ENCODE measurements at regions of chr3 and their contacts with region 1.

Region 1: DNA sequence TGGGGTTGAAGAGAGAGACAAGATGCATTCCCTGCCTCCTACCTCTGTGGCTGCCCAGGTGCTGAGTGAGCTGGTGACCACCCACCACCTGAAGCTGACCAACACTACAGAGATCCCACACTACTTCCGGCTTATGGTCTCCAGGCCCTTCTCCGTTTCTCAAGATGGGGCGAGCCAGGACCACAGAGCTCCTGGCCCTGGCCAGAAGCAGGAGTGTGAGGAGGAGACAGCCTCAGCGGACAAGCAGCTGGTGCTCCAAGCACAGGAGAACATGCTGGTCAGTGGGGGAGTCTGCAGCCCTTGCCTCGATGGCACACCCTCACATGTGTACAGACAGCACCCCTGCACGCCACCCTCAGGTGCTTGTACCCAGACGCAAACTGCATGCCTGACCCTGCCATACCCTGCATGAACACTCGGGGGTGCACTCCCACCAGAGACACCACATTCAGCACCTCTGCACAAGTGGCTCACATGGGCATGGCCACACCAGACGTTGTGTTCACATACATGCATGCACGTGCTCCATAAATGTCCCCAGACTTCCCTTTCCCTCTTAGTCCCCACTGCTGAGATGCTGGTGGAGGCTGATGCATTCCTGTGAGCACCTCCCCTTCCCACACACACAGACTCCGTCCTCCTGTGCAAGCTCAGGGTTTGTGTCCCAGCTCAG is 19.0 kb downstream of the ACAA1 start:
- DNase-seq: peak; percentile 75
- H3K4me3 ChIP-seq: no peak overlapping the region
- H3K27ac ChIP-seq: no peak overlapping the region
- H3K4me1 ChIP-seq: no peaks in the 10 kb centered on the region
- CTCF ChIP-seq: peak; percentile 86

Region 2: GRCh38 chr3:37833302-37834186 is 284.3 kb before region 1 on chr3:
- CTCF ChIA-PET with region 1: no interaction called
- POLR2A ChIA-PET with region 1: no interaction called
- intact Hi-C with region 1: no loop called
- DNase-seq: no peak
- H3K4me3 ChIP-seq: no peak overlapping the region
- H3K27ac ChIP-seq: no peak overlapping the region
- H3K4me1 ChIP-seq: no peaks in the 10 kb centered on the region
- CTCF ChIP-seq: no peak

Region 3: DNA sequence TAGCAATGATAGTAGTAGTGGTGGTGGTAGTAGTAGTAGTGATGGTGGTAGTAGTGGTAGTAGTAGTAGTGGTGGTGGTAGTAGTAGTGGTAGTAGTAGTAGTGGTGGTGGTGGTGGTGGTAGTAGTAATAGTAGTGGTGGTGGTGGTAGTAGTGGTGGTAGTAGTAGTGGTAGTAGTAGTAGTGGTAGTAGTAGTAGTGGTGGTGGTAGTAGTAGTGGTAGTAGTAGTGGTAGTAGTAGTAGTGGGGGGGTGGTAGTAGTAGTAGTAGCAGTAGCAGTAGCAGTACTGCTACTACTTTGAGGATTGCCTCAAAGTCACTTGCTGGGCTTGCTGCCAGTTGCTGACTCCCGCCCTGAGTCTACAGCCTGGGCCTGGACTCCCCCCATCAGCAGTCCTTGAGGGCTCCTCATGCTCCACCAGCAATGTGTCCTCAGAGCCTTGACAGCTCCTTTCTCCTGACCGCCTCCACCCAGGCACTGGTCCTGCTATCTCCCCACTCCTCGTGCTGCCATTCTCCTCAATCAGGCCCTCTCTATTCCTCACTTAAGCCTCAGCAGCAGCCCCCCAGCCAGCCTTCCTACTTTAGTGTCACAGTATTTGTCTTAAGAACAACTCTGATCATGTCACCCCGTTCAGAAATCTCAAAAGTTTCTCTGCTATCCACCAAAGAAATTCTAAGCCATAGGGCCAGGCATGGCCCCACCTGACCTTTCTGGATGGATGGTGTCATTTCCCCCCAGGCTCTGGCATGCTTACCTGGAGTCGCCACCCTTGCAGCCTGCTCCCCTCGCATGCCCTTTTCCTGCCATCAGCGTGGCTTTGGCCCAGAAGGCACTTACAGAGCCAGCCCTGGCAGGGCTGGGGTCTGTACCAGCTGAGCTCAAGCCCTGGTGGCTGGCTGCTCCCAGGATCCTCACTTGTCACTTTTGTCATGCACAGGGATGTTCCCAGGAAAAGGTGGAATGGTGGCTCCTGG is 33.3 kb before region 1 on chr3:
- CTCF ChIA-PET with region 1: no interaction called
- POLR2A ChIA-PET with region 1: no interaction called
- intact Hi-C with region 1: no loop called
- DNase-seq: peak; percentile 17
- H3K4me3 ChIP-seq: no peak overlapping the region
- H3K27ac ChIP-seq: no peak overlapping the region
- H3K4me1 ChIP-seq: no peaks in the 10 kb centered on the region
- CTCF ChIP-seq: no peak

Region 4: DNA sequence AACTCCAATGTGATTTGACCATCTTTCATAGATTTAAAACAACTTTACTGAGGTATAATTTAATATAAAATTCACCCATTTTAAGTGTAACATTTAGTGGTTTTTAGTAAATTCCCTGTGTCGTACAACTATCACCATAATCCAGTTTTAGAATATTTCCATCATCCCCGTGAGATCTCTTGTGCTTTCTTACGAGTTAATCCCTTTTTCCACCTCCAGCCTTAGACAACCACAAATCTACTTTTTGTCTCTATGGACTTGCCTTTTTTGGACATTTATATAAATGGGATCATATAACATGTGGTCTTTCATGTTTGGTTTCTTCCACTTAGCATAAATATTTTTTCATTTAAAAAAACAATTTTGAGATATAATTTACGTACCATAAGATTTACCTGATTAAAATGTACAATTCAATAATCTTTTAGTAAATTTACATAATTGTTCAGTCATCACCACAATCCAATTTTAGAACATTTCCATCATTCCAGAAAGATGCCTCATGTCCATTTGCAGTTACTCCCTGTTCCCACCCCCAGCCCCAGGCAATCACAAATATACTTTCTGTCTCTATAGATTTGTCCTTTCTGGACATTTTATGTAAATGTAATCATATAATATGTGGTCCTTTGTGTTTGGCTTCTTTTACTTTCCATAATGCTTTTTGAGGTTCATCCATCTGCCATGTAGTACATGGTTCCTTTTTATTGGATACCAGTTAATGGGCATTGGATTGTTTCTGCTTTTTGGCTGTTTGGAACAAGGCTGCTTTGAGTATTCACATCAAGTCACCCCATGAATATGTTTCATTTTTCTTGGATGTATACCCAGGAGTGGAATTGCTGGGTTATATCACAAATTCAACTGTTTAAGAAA is 50.5 kb after region 1 on chr3:
- CTCF ChIA-PET with region 1: no interaction called
- POLR2A ChIA-PET with region 1: no interaction called
- intact Hi-C with region 1: no loop called
- DNase-seq: no peak
- H3K4me3 ChIP-seq: no peak overlapping the region
- H3K27ac ChIP-seq: no peak overlapping the region
- H3K4me1 ChIP-seq: peaks cover 35% of the 10 kb centered on the region
- CTCF ChIP-seq: no peak

Region 5: GRCh38 chr3:38297947-38298711 is 180.2 kb after region 1 on chr3:
- CTCF ChIA-PET with region 1: no interaction called
- POLR2A ChIA-PET with region 1: no interaction called
- intact Hi-C with region 1: loop called (anchors 1 kb)
- DNase-seq: peak; percentile 27
- H3K4me3 ChIP-seq: no peak overlapping the region
- H3K27ac ChIP-seq: no peak overlapping the region
- H3K4me1 ChIP-seq: no peaks in the 10 kb centered on the region
- CTCF ChIP-seq: peak; percentile 82

Region 6: DNA sequence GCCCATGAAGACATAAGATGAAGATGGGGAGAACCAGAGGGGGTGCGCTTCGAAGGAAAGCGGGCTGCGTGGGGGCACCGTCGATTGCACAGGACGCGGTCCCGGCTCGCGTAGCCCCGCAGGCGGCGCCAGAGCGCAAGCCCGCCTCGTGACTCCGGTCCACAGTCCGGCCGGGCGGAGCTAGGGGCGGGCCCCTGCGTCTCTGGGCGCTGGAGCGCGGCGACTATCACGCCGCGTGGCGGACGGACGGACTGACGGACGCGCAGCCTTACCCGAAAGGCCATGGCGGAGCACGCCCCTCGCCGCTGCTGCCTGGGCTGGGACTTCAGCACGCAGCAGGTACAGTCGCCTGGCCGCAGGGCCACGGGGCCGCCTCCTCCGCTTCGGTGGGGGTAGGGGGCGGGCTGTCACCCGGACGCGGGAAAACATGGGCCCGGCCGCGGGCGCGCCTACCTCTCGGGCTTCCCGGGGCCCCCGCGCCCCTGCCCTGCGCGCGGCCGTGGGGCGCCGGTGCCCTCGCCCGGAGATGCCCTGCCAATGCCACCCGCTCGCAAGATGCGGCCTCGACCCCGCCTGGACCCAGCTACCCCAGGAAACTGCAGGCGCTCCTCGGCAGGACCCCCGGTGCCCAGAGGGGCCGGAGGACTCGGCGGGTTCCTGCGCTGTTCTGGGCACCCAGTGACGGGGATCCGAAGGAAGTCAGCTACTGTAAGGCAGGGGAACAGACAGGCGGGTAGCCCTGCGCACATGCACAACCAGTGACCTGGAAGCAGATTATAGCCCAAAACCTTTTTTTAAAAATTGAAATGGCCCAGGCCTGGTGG is 228.9 kb after region 1 on chr3 and contains the start of gene XYLB:
- CTCF ChIA-PET with region 1: no interaction called
- POLR2A ChIA-PET with region 1: no interaction called
- intact Hi-C with region 1: loop called (anchors 5 kb)
- DNase-seq: peak; percentile 86
- H3K4me3 ChIP-seq: peak within 1 kb of the TSS; percentile 70
- H3K27ac ChIP-seq: no peak within 1 kb of the TSS
- H3K4me1 ChIP-seq: peaks cover 10% of the 10 kb centered on the region
- CTCF ChIP-seq: peak; percentile 75
- total RNA-seq, gene XYLB: 7.0 and 7.2 TPM in 2 replicates

Region 7: DNA sequence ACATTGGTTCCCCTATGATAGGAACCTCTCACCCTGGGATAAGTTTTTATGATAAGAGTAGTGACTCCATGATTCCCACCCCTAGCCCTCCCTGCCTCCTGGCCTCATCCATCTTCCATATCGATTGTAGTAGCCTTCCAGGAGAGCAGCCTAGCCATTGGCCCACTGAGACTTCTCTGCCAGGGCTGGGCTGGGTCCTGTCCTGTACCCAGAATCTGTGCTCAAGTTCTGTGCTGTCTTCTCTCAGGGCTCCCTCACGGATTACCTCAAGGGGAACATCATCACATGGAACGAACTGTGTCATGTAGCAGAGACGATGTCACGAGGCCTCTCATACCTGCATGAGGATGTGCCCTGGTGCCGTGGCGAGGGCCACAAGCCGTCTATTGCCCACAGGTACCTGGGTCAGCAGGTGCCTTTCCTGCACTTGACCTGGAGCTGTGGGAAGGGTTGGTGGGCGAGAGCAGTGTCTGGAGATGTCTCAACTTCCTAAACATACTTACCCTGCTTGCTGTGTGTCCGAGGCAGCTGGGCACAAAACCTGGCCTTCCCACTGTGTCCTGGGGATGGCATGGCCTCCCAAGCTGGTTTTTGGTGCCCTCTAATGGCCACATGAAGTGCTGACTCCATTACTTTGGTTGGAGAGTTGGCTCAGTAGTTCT is 361.7 kb after region 1 on chr3:
- CTCF ChIA-PET with region 1: interaction called, 3 read pairs
- POLR2A ChIA-PET with region 1: no interaction called
- intact Hi-C with region 1: loop called (anchors 1 kb)
- DNase-seq: peak; percentile 53
- H3K4me3 ChIP-seq: no peak overlapping the region
- H3K27ac ChIP-seq: no peak overlapping the region
- H3K4me1 ChIP-seq: no peaks in the 10 kb centered on the region
- CTCF ChIP-seq: peak; percentile 92